AG04450 (cell line): ENCODE measurements at regions of chr19 and their contacts with region 1.

Region 1: GRCh38 chr19:12064590-12065538 is at the start of gene ZNF844:
- DNase-seq: peak; percentile 57
- H3K4me3 ChIP-seq: peak within 1 kb of the TSS; percentile 97
- H3K27ac ChIP-seq: peak within 1 kb of the TSS; percentile 77
- H3K27me3 ChIP-seq: no peaks in the 10 kb centered on the region
- CTCF ChIP-seq: no peak
- polyA plus RNA-seq, gene ZNF844: 4.5 and 6.9 TPM in 2 replicates

Region 2: GRCh38 chr19:11971041-11971440 is 93.8 kb before region 1 on chr19:
- CTCF ChIA-PET with region 1: no interaction called
- POLR2A ChIA-PET with region 1: no interaction called
- DNase-seq: no peak
- H3K4me3 ChIP-seq: no peak overlapping the region
- H3K27ac ChIP-seq: no peak overlapping the region
- H3K27me3 ChIP-seq: no peaks in the 10 kb centered on the region
- CTCF ChIP-seq: no peak

Region 3: DNA sequence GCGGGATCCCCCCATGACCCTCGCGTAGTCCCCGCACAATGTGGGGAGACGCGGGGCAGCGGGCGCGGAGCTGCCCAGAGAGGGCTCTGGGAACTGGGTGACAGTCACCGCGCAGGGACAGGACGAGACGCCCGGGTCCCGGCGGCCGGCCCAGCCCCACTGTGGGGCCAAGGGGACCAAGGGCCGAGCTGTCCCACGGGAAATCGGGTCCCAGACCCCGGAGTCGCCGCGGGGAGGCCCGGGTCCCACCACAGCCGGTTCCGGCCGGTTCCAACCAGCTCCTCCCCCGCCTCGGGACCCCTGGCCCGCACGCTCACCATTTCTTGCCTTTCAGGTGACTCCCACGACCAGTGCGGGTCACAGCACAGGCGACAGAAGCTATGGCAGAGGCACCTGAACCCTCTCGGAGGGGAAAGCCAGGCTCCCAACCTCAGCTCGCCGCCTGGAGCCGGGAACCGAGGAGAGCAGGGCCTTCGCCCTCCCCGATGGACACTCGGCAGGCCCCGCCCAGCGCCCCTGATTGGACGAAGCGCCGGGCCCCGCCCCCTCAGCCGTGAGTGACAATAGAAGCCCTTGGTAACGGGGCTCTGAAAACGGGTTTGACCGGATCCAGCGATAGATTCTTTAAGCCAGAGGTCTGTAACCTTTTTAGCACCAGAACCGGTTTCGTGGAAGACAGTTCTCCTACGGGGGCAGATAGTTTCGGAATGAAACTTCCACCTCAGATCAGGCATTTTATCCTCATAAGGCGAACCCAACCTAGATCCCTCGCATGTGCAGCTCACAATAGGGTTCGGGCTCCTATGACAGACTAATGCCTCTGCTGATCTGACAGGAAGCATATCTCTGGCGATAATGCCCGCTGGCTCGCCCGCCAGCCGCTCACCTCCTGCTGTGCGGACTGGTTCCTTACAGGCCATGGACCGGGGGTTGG is 29.4 kb before region 1 on chr19 and contains the start of gene ZNF433:
- CTCF ChIA-PET with region 1: interaction called, 10 read pairs
- POLR2A ChIA-PET with region 1: interaction called, 3 read pairs
- DNase-seq: peak; percentile 36
- H3K4me3 ChIP-seq: peak within 1 kb of the TSS; percentile 89
- H3K27ac ChIP-seq: no peak within 1 kb of the TSS
- H3K27me3 ChIP-seq: no peaks in the 10 kb centered on the region
- CTCF ChIP-seq: no peak
- polyA plus RNA-seq, gene ZNF433: 4.3 and 5.6 TPM in 2 replicates

Region 4: DNA sequence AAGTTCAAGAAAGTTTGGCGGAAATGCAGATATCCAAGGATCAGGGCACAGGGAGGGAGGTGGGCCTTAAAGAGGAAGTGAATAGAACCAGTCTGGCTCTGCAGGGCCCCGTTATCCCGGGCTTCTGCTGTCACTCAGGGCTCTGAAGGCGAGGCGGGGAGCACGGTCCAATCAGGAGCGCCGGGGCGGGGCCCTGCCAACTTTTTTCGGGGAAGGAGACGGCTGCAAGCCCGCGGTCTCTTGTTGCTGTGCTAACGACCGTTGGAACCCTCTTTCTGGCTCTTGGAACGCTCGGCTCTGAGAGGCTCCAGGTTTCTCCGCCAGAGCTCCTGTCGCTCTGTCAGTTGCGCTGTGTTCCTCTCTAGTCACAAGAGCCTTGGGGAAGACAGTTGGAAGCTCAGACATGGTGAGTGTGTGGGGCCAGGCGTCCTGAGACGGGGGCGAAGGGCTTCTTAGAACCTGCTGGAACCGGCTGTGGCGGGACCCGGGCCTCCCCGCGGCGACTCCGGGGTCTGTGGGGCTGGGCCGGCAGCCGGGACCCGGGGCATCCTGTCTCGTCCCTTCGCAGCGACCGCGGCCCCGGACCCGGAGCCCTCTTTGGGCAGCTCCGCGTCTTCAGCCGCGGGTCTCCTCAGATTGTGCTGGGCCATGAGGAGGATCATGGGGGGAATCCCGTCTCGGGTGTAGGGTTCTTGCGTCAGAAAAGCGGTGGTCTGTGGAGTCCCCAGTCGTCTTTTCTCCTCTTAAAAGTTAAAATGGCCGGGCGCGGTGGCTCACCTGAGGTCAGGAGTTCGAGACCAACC is 27.4 kb after region 1 on chr19:
- CTCF ChIA-PET with region 1: interaction called, 24 read pairs
- POLR2A ChIA-PET with region 1: no interaction called
- DNase-seq: peak; percentile 64
- H3K4me3 ChIP-seq: peak overlapping the region; percentile 81
- H3K27ac ChIP-seq: peak overlapping the region; percentile 75
- H3K27me3 ChIP-seq: no peaks in the 10 kb centered on the region
- CTCF ChIP-seq: no peak

Region 5: GRCh38 chr19:12139885-12140547 is 75.2 kb after region 1 on chr19 and contains the start of gene ZNF20:
- CTCF ChIA-PET with region 1: interaction called, 33 read pairs
- POLR2A ChIA-PET with region 1: interaction called, 5 read pairs
- DNase-seq: peak; percentile 78
- H3K4me3 ChIP-seq: peak within 1 kb of the TSS; percentile 75
- H3K27ac ChIP-seq: peak within 1 kb of the TSS; percentile 66
- H3K27me3 ChIP-seq: no peaks in the 10 kb centered on the region
- CTCF ChIP-seq: no peak
- polyA plus RNA-seq, gene ZNF20: 2.4 and 2.7 TPM in 2 replicates

Region 6: DNA sequence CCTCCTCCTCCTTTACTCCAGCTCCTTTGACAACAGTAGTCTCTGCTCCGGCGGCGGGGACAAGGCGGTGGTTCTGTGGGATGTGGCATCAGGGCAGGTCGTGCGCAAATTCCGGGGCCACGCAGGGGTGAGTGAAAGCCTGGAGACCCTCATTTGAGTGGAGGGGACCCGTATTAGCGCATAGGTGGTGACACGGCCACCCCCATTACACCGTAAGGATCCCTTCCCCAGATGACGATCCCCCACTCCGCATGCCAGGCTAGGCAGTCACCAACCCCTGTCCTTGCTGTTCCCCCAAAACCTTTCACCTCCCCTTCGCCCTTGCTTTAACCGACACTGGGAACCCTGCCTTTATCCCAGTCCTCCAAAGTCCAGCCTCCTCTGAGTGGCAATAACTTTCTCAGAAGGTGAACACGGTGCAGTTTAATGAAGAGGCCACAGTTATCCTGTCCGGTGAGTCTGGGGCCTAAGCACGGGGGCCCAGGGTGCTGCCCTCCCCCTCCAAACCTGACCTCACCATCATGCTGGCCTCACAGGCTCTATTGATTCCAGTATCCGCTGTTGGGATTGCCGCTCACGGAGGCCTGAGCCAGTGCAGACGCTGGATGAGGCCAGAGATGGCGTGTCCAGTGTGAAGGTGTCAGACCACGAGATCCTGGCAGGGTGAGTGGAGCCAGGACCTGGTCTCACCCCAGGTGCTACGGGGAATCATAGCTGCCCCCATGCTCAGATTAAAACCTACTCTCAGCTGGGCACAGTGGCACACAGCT is 605.5 kb after region 1 on chr19:
- CTCF ChIA-PET with region 1: interaction called, 10 read pairs
- POLR2A ChIA-PET with region 1: no interaction called
- DNase-seq: no peak
- H3K4me3 ChIP-seq: peak overlapping the region; percentile 94
- H3K27ac ChIP-seq: peak overlapping the region; percentile 98
- H3K27me3 ChIP-seq: no peaks in the 10 kb centered on the region
- CTCF ChIP-seq: no peak